ENCODE measurements at regions of chr7 and their contacts with region 1.

Region 1: GRCh38 chr7:12007576-12007975 is 175.6 kb upstream of the THSD7A start:
- DNase-seq: no peak
- ATAC-seq: no peak
- H3K4me3 ChIP-seq: no peak overlapping the region
- H3K27ac ChIP-seq: no peak overlapping the region
- H3K4me1 ChIP-seq: no peaks in the 10 kb centered on the region
- H3K27me3 ChIP-seq: no peaks in the 10 kb centered on the region
- CTCF ChIP-seq: no peak

Region 2: GRCh38 chr7:11281953-11282352 is 725.6 kb before region 1 on chr7:
- CTCF ChIA-PET with region 1: no interaction called
- POLR2A ChIA-PET with region 1: no interaction called
- intact Hi-C with region 1: no loop called
- DNase-seq: no peak
- ATAC-seq: no peak
- H3K4me3 ChIP-seq: no peak overlapping the region
- H3K27ac ChIP-seq: no peak overlapping the region
- H3K4me1 ChIP-seq: no peaks in the 10 kb centered on the region
- H3K27me3 ChIP-seq: no peaks in the 10 kb centered on the region
- CTCF ChIP-seq: no peak

Region 3: DNA sequence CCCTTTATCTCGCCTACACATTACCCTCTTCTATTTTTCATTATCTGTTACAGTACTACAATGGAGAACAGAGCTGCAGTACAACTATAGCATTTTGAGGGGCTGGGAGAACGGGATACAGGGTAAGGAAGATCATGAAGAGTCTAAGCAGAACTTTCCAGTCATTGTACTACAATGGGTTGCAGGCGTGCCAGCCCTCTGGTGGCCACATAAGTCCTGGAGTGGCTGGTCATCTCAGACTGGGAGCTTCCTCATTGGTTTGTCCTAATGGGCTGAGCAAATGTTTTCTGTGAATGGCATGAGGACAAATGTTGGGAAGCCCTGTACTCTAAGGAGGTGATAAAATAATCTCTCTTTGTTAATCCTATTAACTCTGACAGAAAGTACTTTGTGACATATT is 236.6 kb after region 1 on chr7:
- CTCF ChIA-PET with region 1: interaction called, 10 read pairs
- POLR2A ChIA-PET with region 1: no interaction called
- intact Hi-C with region 1: no loop called
- DNase-seq: peak; percentile 59
- ATAC-seq: peak; percentile 83
- H3K4me3 ChIP-seq: no peak overlapping the region
- H3K27ac ChIP-seq: no peak overlapping the region
- H3K4me1 ChIP-seq: peaks cover 11% of the 10 kb centered on the region
- H3K27me3 ChIP-seq: no peaks in the 10 kb centered on the region
- CTCF ChIP-seq: peak; percentile 74